Mammary epithelial cell (primary cell): ENCODE measurements at regions of chr20 and their contacts with region 1.

Region 1: GRCh38 chr20:56909918-56910714 is 281.0 kb downstream of the TFAP2C start:
- DNase-seq: no peak
- H3K4me3 ChIP-seq: no peak overlapping the region
- H3K27ac ChIP-seq: no peak overlapping the region
- H3K4me1 ChIP-seq: no peaks in the 10 kb centered on the region
- H3K27me3 ChIP-seq: no peaks in the 10 kb centered on the region
- CTCF ChIP-seq: no peak

Region 2: GRCh38 chr20:56839786-56840185 is 70.3 kb before region 1 on chr20:
- CTCF ChIA-PET with region 1: no interaction called
- dilution Hi-C with region 1: no loop called
- in situ Hi-C with region 1: no loop called
- intact Hi-C with region 1: no loop called
- DNase-seq: no peak
- H3K4me3 ChIP-seq: no peak overlapping the region
- H3K27ac ChIP-seq: no peak overlapping the region
- H3K4me1 ChIP-seq: no peaks in the 10 kb centered on the region
- H3K27me3 ChIP-seq: peaks cover 7% of the 10 kb centered on the region
- CTCF ChIP-seq: no peak

Region 3: DNA sequence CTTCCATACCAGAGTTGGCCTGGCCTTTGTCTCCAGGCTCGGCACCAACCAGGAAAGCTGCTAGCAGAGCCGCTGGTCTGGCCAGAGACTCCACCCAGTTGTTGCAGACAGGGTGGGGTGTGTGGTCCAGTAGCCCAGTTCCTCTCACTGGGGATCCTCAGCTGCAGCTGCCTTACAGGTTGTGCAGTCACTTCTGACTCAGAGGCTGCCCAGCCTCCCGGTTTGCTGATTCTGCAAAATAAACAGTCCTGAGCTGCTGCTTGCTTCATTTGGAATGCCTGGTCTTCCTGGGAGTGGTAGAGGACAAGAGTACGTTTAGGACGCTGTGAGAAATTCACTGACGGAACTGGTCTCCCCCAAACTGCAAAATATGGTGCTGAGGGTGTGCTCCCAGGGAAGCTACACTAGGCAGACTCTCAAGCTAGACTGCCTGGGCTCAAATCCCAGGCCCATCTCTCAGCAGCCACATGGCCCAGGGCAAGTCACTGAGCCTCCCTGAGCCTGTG is 35.0 kb before region 1 on chr20:
- CTCF ChIA-PET with region 1: no interaction called
- dilution Hi-C with region 1: loop called (anchors 5 kb)
- in situ Hi-C with region 1: no loop called
- intact Hi-C with region 1: no loop called
- DNase-seq: peak; percentile 91
- H3K4me3 ChIP-seq: no peak overlapping the region
- H3K27ac ChIP-seq: peak overlapping the region; percentile 12
- H3K4me1 ChIP-seq: peaks cover 7% of the 10 kb centered on the region
- H3K27me3 ChIP-seq: no peaks in the 10 kb centered on the region
- CTCF ChIP-seq: no peak